ENCODE measurements at regions of chr12 and their contacts with region 1.

Region 1: GRCh38 chr12:11581179-11581755 is 68.2 kb upstream of the ETV6 start:
- DNase-seq: peak; percentile 43 to 77
- ATAC-seq: no peak
- H3K4me3 ChIP-seq: no peak overlapping the region
- H3K27ac ChIP-seq: peak overlapping the region in 1 of 2 experiments; percentile 52; a peak in 2 of 6 replicates
- H3K4me1 ChIP-seq: peaks cover 21% of the 10 kb centered on the region
- CTCF ChIP-seq: peak; percentile 90
- EP300 ChIP-seq: no peak
- POLR2A ChIP-seq: no peak
- RAD21 ChIP-seq: peak; percentile 93

Region 2: GRCh38 chr12:10838461-10838860 is 742.8 kb before region 1 on chr12:
- CTCF ChIA-PET with region 1: no interaction called
- POLR2A ChIA-PET with region 1: no interaction called
- DNase-seq: no peak
- ATAC-seq: no peak
- H3K4me3 ChIP-seq: no peak overlapping the region
- H3K27ac ChIP-seq: no peak overlapping the region
- H3K4me1 ChIP-seq: no peaks in the 10 kb centered on the region
- CTCF ChIP-seq: no peak
- EP300 ChIP-seq: no peak
- POLR2A ChIP-seq: no peak
- RAD21 ChIP-seq: no peak

Region 3: DNA sequence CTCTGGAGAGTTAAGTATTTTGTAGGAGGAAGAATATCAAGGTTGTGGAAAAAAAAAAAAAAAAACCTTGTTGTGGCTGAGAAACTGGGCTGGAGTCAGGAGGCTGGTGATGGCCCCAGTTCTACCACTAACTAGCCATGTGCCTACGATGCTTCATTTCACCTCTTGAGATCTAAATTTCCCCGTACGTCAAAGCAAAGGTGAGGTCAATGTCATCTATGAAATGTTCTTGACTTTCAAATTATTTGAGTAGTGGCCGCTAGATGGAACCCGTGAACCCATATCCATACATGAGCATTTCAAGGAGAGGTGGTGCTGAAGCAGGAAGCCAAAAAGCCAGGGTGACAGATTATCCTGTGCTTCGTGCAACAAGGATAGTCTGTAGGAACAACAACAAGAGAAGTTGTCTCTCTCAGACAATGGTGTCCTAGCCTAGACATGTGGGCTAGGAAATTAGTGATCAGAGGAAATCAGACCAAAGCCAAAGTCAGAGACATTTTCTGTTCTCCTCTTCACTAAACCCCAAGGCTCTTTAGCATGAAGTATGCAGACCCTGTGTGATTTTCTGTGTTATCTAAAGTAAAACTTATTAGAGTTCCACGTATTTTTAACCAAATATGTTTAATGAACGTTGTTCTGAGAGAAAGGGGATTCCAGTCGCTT is 27.3 kb before region 1 on chr12:
- CTCF ChIA-PET with region 1: interaction called, 10 read pairs
- POLR2A ChIA-PET with region 1: no interaction called
- DNase-seq: peak; percentile 70 to 83
- ATAC-seq: peak; percentile 58 to 86; a peak in 5 of 6 replicates
- H3K4me3 ChIP-seq: no peak overlapping the region
- H3K27ac ChIP-seq: no peak overlapping the region
- H3K4me1 ChIP-seq: no peaks in the 10 kb centered on the region
- CTCF ChIP-seq: peak; percentile 66
- EP300 ChIP-seq: no peak
- POLR2A ChIP-seq: no peak
- RAD21 ChIP-seq: peak; percentile 68 to 74

Region 4: DNA sequence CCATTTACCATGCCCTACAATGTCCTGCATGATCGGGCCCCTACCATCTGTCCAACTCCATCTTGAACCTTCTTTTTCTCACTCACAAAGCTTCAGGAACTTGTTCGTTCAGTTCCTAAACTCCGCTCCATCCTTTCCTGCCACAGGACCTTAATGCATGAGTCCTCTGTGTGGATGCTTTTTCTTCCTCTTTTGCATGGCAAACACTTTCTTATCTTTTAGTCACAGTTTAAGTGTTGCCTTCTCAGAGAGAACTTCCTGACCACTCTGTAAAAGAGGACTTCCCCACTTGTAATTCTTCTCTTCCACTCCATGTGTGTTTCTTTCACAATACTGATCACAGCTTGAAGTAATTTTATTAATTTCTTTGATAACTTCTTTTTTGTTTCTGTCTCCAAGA is 13.8 kb after region 1 on chr12:
- CTCF ChIA-PET with region 1: interaction called, 12 read pairs
- POLR2A ChIA-PET with region 1: no interaction called
- DNase-seq: no peak
- ATAC-seq: no peak
- H3K4me3 ChIP-seq: no peak overlapping the region
- H3K27ac ChIP-seq: no peak overlapping the region
- H3K4me1 ChIP-seq: no peaks in the 10 kb centered on the region
- CTCF ChIP-seq: no peak
- EP300 ChIP-seq: no peak
- POLR2A ChIP-seq: no peak
- RAD21 ChIP-seq: no peak

Region 5: DNA sequence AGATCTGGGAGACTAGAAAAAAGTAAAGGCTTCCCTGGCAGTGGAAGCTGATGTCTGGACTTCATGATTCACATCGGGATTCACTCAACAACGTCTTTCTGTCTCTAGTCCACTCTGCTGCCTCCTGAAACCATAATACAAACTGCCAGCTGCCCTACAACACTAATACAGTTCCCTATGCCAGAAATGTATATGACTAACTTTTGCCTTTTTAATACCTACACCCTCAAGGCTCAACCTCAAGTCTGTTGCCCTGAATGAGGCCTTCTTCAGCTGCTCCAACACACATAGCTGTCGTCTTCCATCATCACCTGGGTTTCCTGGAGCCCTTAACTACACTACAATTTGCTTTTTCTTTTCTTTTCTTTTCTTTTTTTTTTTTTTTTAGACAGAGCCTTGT is 306.8 kb after region 1 on chr12:
- CTCF ChIA-PET with region 1: interaction called, 13 read pairs
- POLR2A ChIA-PET with region 1: interaction called, 3 read pairs
- DNase-seq: no peak
- ATAC-seq: no peak
- H3K4me3 ChIP-seq: no peak overlapping the region
- H3K27ac ChIP-seq: no peak overlapping the region
- H3K4me1 ChIP-seq: peaks cover 29% of the 10 kb centered on the region
- CTCF ChIP-seq: no peak
- EP300 ChIP-seq: no peak
- POLR2A ChIP-seq: no peak
- RAD21 ChIP-seq: no peak